Activated CD4-positive, alpha-beta T cell treated with anti-CD3 and anti-CD28 coated beads, Interleukin-2, amount 10 ng/mL, durations not matched to agents 7 days and 5 days (primary cell): ENCODE measurements at regions of chr3 and their contacts with region 1.

Region 1: DNA sequence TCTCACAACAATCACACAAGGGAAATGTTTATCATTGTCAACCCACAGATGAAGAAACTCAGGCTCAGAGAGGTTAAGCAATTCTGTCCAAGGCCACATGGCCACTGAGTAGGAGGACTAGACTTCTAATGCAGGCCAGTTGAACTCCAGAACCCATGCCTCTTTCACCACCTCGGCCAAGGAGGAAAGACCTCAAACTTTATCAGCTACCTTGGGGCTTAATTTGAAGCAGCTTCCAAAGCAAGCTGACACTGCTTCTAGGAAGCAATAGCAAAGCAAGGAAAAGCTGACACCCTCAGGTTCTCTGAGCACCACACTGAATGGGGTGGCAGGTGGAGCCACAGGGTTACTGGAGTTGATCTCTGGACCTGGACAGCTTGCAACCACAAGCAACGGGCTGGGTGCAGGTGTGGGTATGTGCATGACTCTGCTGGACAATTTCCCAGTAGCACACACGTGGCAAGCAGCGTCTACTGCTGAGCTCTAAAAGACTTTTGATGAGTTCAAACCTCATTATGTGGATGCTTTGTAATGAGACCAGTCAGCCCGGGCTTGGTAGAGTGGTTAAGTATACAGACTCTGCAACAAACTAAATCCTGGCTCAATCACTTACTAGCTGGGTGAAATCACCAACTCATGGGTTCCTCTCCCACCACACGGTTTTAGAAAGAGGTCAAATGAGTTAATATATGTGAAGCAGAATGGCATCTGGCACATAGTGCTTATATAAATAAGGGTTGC is 23.1 kb downstream of the CCNL1 start:
- DNase-seq: no peak
- H3K4me3 Mint-ChIP-seq: no peak overlapping the region
- H3K27ac Mint-ChIP-seq: peak overlapping the region; percentile 81
- H3K4me1 Mint-ChIP-seq: peaks cover 62% of the 10 kb centered on the region
- H3K27me3 Mint-ChIP-seq: no peaks in the 10 kb centered on the region

Region 2: GRCh38 chr3:156674046-156674910 is 462.5 kb before region 1 on chr3 and contains the start of gene TIPARP:
- CTCF ChIA-PET with region 1: interaction called, 19 read pairs
- POLR2A ChIA-PET with region 1: no interaction called
- DNase-seq: peak; percentile 99
- H3K4me3 Mint-ChIP-seq: peak within 1 kb of the TSS; percentile 95
- H3K27ac Mint-ChIP-seq: peak within 1 kb of the TSS; percentile 98
- H3K4me1 Mint-ChIP-seq: peaks cover 49% of the 10 kb centered on the region
- H3K27me3 Mint-ChIP-seq: no peaks in the 10 kb centered on the region
- total RNA-seq, gene TIPARP: 58.0 to 66.0 TPM

Region 3: GRCh38 chr3:157088601-157089454 is 48.0 kb before region 1 on chr3:
- CTCF ChIA-PET with region 1: interaction called, 17 read pairs
- POLR2A ChIA-PET with region 1: interaction called, 5 read pairs
- DNase-seq: peak; percentile 94
- H3K4me3 Mint-ChIP-seq: peak overlapping the region; percentile 80
- H3K27ac Mint-ChIP-seq: peak overlapping the region; percentile 94
- H3K4me1 Mint-ChIP-seq: peaks cover 70% of the 10 kb centered on the region
- H3K27me3 Mint-ChIP-seq: no peaks in the 10 kb centered on the region

Region 4: DNA sequence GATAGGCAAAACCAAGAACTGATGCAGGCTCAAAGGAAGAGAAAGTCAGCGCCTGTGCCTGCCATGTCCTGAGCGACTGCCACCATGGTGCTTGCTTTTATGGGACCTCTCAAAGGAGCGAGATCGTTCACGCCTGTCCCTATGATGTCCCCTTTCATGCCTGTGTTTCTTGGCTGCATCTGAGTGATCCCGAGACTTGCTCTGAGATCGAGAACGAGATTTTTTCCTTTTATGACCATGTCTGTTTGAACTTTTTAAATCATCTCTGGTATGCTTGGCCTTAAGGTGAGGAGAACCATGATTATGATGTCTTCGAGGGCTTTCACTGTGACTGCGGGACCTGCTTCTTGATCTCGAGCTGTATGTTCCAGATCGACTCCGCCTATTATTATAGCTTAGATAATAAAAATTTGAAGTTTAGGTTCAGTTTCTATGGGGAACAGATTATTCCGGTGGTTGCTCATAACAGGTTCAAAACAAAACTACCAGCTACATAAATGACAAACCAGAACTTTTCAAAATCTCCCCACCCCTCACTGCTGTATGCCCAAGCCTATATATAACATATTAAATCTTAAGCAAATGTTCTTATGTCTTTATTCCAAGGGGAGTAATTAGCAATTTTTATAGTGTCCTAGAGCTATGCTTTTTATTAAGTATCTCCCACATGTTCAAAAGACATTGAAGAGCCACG is 11.5 kb after region 1 on chr3:
- CTCF ChIA-PET with region 1: interaction called, 25 read pairs
- POLR2A ChIA-PET with region 1: no interaction called
- DNase-seq: no peak
- H3K4me3 Mint-ChIP-seq: no peak overlapping the region
- H3K27ac Mint-ChIP-seq: no peak overlapping the region
- H3K4me1 Mint-ChIP-seq: peaks cover 46% of the 10 kb centered on the region
- H3K27me3 Mint-ChIP-seq: no peaks in the 10 kb centered on the region